Endothelial cell of umbilical vein (primary cell): ENCODE measurements at regions of chr1 and their contacts with region 1.

Region 1: DNA sequence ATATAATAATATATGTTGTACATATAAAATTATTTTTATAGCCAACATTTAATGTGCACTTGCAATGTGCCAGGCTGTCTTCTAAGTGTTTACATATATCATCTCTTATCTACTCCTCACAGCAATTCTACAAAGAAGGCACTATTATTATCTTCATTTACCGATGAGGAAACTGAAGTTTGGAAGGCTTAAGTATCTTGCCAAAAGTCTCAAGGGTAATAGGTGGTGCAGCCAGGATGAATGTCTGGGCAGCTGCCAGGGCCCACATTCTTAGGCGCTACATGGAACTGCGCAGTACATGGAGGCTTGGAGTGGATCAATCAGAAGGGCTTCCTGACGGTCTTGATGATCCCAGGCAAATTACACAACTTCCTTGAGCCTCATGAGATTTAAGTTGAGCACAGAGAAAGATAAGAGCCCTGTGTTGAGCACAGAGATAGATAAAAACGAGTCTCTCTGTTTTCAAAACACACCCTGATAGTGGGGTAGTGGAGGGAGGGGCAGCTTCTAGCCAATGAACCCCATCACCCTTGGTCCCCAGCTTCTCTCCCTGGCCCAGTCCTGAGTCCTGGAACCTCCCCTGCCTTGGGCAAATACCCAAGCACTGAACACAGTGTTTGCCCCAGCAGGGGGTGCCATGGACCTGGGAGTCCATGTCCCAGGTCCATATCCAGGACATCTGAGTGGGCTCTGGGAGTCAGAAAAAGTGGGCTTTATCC is 9.2 kb downstream of the POU3F1 start:
- DNase-seq: no peak
- H3K4me3 ChIP-seq: no peak overlapping the region
- H3K27ac ChIP-seq: no peak overlapping the region
- H3K4me1 ChIP-seq: no peaks in the 10 kb centered on the region
- H3K27me3 ChIP-seq: peaks cover 14 to 18% of the 10 kb centered on the region in 2 experiments
- CTCF ChIP-seq: peak; percentile 21 to 35
- POLR2A ChIP-seq: no peak

Region 2: DNA sequence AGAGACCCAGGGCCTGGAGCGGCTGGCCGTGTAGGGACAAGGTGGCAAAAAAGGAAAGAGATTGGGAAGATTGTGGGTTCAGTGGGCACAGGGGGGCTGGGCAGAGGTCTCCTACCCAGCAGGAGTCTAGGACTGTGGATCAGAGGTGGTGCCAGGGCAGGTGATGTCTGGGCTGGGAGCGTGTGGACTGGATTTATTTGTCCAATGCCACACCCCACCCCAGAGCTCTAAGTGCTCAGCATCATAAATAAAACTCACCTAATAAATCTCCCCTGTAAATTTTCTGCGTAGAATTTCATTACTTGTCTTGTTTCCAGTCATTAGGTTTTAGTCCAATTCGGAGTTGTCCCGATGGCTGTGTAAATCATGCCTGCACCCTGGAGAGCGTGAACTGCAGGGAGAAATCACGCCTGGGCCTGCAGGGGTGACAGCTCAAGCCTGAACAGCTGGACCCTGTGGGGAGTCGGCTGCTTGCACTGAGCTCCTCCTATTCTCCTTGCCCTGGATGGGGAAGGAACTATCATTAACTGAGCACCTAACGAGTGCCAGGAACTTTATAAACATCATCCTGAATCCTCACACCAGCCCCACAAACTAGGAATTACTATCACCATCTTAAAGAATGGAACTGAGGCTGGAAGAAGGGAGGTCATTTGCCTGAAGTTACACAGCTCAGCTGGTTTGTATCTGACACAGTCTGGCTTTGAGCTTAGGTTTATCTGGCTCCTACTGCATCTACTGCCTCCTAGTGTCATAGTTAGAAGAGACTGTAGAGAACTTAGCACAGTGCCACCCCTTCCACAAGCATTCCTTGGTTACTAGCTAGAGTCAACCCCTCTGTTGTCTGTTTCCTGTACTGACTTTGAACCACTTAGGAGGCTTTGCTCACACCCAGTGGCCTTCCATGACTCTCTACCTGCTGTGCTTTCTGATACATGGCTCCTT is 34.2 kb after region 1 on chr1:
- CTCF ChIA-PET with region 1: interaction called, 12 read pairs
- POLR2A ChIA-PET with region 1: no interaction called
- dilution Hi-C with region 1: no loop called
- intact Hi-C with region 1: no loop called
- DNase-seq: peak; percentile 28
- H3K4me3 ChIP-seq: no peak overlapping the region
- H3K27ac ChIP-seq: no peak overlapping the region
- H3K4me1 ChIP-seq: no peaks in the 10 kb centered on the region
- H3K27me3 ChIP-seq: peaks cover 7 to 8% of the 10 kb centered on the region in 2 experiments
- CTCF ChIP-seq: peak in 1 of 2 donors; percentile 41
- POLR2A ChIP-seq: no peak

Region 3: DNA sequence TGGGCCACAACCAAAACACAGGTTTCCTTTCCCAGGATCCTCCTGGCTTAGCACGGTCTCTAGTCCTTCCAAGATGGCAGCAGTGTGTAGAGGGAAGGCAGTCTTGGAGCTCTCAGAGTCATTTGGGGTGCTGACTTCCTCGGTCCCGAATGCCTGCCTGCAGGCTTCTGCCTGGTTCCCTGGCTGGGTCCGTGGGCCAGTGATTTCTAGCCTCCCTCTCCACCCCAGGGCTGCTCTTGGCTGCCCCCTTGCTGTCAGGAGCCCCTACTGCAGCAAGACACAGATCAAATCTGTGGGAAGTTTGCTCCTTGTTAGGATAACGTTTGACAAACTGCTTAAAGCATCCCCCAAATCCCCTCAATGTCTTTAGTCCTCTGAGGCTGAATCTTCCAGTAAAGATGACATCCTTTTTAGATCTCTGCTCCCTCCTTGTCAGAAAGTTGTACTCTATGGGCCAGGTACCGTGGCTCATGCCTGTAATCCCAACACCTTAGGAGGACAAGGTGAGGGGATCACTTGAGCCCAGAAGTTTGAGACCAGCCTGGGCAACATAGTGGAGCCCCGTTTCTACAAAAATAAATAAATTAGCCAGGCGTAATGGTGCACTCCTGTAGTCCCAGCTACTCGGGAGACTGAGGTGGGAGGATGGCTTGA is 549.7 kb after region 1 on chr1:
- CTCF ChIA-PET with region 1: no interaction called
- POLR2A ChIA-PET with region 1: no interaction called
- dilution Hi-C with region 1: no loop called
- intact Hi-C with region 1: loop called (anchors 1 kb)
- DNase-seq: peak; percentile 41
- H3K4me3 ChIP-seq: no peak overlapping the region
- H3K27ac ChIP-seq: no peak overlapping the region
- H3K4me1 ChIP-seq: no peaks in the 10 kb centered on the region
- H3K27me3 ChIP-seq: peaks cover 0 to 1% of the 10 kb centered on the region in 2 experiments
- CTCF ChIP-seq: peak; percentile 90 to 93
- POLR2A ChIP-seq: no peak